ENCODE measurements at regions of chr12 and their contacts with region 1.

Region 1: DNA sequence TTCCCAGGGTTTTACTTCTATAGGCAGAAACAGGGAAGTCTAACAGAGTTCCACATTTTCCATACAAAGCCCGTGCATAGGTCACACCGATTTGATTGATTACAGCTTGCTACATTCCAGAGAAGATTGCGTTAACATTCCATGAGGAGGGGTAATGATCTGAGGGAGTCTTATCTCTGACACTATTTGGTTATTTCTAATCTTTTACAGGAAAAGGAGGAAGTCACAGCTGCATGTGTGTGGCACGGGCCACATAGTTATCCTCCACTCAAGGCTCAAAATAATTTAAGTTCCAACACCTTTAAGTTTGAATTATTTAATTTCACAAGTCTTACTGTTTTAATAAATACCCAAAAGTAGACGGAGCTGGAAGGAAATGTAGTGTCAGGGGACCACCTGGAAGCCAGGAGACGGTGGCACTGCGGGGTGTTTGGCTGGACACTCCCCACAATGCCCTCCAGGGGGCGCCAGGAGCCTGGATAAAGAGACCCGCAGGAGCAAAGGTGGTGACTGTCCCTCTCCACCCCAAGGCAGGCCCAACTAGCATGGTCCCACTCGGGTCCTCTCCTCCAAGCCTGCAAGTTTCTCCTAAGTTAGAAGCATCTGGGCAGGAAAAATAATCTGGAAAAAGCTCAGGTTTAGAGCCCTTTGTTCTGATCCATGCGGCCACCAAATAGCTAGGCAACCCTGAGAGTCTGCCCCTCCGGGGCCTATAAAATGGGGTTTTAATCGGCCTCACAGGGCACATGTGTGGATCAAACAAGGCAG is 20.2 kb downstream of the KRT8 start:
- DNase-seq: peak; percentile 66 to 71 (median 67)
- H3K4me3 ChIP-seq: no peak overlapping the region
- H3K4me3 Mint-ChIP-seq: no peak overlapping the region
- H3K27ac ChIP-seq: no peak overlapping the region
- H3K27ac Mint-ChIP-seq: no peak overlapping the region
- H3K4me1 ChIP-seq: peaks cover 5% of the 10 kb centered on the region
- H3K4me1 Mint-ChIP-seq: peaks cover 3 to 7% (median 5%) of the 10 kb centered on the region in 4 donors
- H3K27me3 ChIP-seq: no peaks in the 10 kb centered on the region
- H3K27me3 Mint-ChIP-seq: peaks cover 5 to 9% of the 10 kb centered on the region in 2 donors

Region 2: DNA sequence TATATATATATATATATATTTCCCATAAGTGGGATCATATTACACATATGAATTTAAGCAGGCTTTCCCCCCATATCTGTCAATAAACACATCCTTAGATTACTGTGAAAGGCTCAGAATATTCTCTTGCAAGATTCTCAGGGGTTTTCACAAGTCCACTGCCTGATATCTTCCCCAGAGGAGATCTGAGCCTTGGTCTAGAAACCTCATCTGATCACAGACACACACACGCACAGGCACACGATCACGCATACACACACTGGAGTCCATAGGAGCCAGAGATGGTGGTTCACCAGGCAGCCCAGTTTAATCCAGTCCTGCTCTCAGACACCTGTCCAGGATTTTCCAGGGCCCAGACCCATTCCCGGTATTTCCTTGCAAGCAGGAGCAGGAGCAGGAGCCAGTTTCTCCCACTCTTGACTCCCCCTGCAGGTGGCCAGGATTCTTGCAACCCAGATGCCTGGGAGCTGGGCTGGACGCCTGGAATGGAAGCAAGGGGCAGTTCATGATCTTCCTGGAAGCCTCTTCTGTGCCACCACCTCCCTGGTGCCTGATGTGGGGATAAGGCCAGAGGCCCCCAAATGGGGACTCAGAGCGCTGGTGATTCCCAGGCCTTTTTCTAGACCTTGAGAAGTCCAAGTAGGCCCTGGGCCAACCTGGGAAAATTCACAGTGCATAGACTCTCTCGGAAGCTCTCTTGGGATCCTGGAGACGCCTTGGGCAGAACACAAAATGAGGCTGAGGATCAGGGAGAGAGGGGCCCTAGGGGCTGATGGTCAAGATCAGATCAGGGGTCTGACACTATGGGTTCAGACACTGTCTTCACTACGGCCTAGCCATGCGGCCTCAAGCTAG is 19.4 kb before region 1 on chr12:
- CTCF ChIA-PET with region 1: interaction called, 34 read pairs
- POLR2A ChIA-PET with region 1: interaction called, 6 read pairs
- intact Hi-C with region 1: no loop called
- DNase-seq: no peak
- H3K4me3 ChIP-seq: no peak overlapping the region
- H3K4me3 Mint-ChIP-seq: no peak overlapping the region
- H3K27ac ChIP-seq: no peak overlapping the region
- H3K27ac Mint-ChIP-seq: peak overlapping the region in 1 of 7 donors; percentile 59
- H3K4me1 ChIP-seq: peaks cover 8% of the 10 kb centered on the region
- H3K4me1 Mint-ChIP-seq: peaks cover 5 to 11% (median 11%) of the 10 kb centered on the region in 4 donors
- H3K27me3 ChIP-seq: no peaks in the 10 kb centered on the region
- H3K27me3 Mint-ChIP-seq: no peaks in the 10 kb centered on the region

Region 3: GRCh38 chr12:52895061-52895887 is 10.6 kb after region 1 on chr12:
- CTCF ChIA-PET with region 1: interaction called, 17 read pairs
- POLR2A ChIA-PET with region 1: no interaction called
- intact Hi-C with region 1: no loop called
- DNase-seq: no peak
- H3K4me3 ChIP-seq: no peak overlapping the region
- H3K4me3 Mint-ChIP-seq: no peak overlapping the region
- H3K27ac ChIP-seq: no peak overlapping the region
- H3K27ac Mint-ChIP-seq: peak overlapping the region in 1 of 7 donors; percentile 31
- H3K4me1 ChIP-seq: no peaks in the 10 kb centered on the region
- H3K4me1 Mint-ChIP-seq: no peaks in the 10 kb centered on the region
- H3K27me3 ChIP-seq: no peaks in the 10 kb centered on the region
- H3K27me3 Mint-ChIP-seq: peaks cover 2 to 16% of the 10 kb centered on the region in 2 donors

Region 4: GRCh38 chr12:52949413-52950331 is 65.0 kb after region 1 on chr12:
- CTCF ChIA-PET with region 1: interaction called, 10 read pairs
- POLR2A ChIA-PET with region 1: no interaction called
- intact Hi-C with region 1: no loop called
- DNase-seq: no peak
- H3K4me3 ChIP-seq: peak overlapping the region in 1 of 2 donors; percentile 66
- H3K4me3 Mint-ChIP-seq: peak overlapping the region; percentile 52 to 83 (median 69)
- H3K27ac ChIP-seq: no peak overlapping the region
- H3K27ac Mint-ChIP-seq: peak overlapping the region in 5 of 7 donors; percentile 38 to 76 (median 69)
- H3K4me1 ChIP-seq: peaks cover 8% of the 10 kb centered on the region
- H3K4me1 Mint-ChIP-seq: peaks cover 2 to 22% (median 12%) of the 10 kb centered on the region in 4 donors
- H3K27me3 ChIP-seq: no peaks in the 10 kb centered on the region
- H3K27me3 Mint-ChIP-seq: peaks cover 0 to 6% of the 10 kb centered on the region in 2 donors

Region 5: DNA sequence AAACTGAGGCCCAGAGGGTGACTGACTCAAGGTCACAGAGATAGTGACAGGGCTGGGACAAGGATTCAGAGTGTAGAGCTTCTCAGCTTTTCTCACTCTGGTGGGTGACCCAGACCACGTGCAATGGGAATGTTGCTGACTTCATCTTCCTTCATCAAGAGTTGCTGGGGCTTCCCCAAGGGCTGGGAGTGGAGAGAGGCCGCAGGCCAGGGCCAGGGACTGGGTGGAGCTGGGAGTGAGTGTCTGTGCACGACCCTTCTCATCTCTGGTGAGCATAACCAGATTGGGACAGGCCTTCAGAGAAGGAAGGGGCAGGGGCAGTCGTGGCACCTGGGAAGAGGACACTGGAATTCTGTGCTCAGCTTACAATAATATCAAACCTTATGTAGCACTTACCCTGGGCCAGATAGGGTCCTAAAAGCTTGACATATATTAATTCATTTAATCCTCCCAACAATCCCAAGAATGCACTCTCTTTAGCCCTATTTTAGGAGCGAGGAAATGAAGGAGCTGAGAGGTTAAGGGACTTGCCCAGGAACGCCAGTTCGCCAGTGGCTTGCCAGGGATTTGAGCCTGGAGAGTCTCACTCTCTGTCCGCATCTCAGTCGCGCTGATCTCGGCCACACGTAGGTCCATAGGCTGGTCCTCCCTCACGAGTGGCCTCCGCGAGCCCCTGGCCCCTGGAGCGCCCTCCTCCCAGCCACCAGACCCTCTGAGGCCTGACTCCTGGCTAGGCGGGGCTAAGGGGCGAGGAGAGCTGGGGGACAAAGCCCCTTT is 80.0 kb after region 1 on chr12:
- CTCF ChIA-PET with region 1: interaction called, 10 read pairs
- POLR2A ChIA-PET with region 1: no interaction called
- intact Hi-C with region 1: no loop called
- DNase-seq: no peak
- H3K4me3 ChIP-seq: no peak overlapping the region
- H3K4me3 Mint-ChIP-seq: no peak overlapping the region
- H3K27ac ChIP-seq: no peak overlapping the region
- H3K27ac Mint-ChIP-seq: no peak overlapping the region
- H3K4me1 ChIP-seq: no peaks in the 10 kb centered on the region
- H3K4me1 Mint-ChIP-seq: no peaks in the 10 kb centered on the region
- H3K27me3 ChIP-seq: no peaks in the 10 kb centered on the region
- H3K27me3 Mint-ChIP-seq: peaks cover 7 to 18% of the 10 kb centered on the region in 2 donors

Measured in CD4-positive, alpha-beta memory T cell (primary cell).